HAP-1 (cell line): ENCODE measurements at regions of chr10 and their contacts with region 1.

Region 1: GRCh38 chr10:125982260-125982948 is 86.0 kb downstream of the FANK1 start:
- DNase-seq: peak; percentile 49 to 66
- H3K4me3 ChIP-seq: no peak overlapping the region
- H3K4me1 ChIP-seq: peaks cover 8% of the 10 kb centered on the region
- H3K27me3 ChIP-seq: no peaks in the 10 kb centered on the region

Region 2: GRCh38 chr10:126160971-126161659 is 178.7 kb after region 1 on chr10:
- in situ Hi-C with region 1: loop called (anchors 5 kb)
- DNase-seq: peak; percentile 36 to 50
- H3K4me3 ChIP-seq: no peak overlapping the region
- H3K4me1 ChIP-seq: no peaks in the 10 kb centered on the region; the same call in 1 of the 2 replicates
- H3K27me3 ChIP-seq: no peaks in the 10 kb centered on the region

Region 3: DNA sequence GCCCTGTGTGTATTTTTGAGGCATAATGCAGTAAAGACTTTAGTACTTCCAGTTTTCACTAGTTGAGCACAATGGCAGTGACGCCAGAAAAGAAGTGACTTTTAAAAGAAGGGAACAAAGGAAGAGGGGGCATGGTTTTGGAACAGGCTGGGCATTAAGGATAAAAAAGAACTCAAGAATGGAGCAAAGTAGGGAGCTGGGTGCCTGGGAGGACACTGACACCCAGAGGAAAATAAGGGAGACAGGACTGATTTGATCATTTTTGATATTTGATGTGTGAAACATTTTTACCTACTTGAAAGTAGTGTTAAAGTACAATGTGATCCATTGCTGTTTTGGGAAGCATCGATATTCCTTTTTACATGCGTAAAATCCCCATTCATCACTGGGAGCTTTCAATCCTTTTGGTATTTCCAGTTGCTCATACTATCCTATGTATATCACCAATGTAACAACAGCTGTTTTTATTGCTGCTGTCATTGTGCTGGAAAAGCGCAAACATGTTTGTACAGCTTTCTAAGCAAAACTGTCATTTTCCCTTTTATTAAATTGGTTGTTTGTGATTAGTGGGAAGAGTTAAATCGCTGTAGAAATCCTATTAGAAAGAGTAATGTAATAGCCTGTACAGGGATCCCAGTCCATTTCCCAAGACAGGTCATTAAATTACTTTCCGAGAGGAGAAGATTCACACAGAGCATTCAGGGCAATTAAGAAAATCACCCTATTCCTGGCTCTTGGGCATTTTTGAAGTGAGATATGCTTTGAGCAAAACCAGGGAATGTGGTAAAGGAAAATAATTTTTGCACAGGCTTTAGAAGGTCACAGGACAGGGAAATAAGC is 320.6 kb after region 1 on chr10:
- in situ Hi-C with region 1: loop called (anchors 5 kb)
- DNase-seq: peak; percentile 33 to 50
- H3K4me3 ChIP-seq: no peak overlapping the region
- H3K4me1 ChIP-seq: peaks cover 7% of the 10 kb centered on the region
- H3K27me3 ChIP-seq: no peaks in the 10 kb centered on the region; the same call in 1 of the 2 replicates

Region 4: GRCh38 chr10:126397640-126398382 is 415.4 kb after region 1 on chr10:
- in situ Hi-C with region 1: loop called (anchors 10 kb)
- DNase-seq: no peak
- H3K4me3 ChIP-seq: no peak overlapping the region
- H3K4me1 ChIP-seq: no peaks in the 10 kb centered on the region
- H3K27me3 ChIP-seq: peaks cover 3% of the 10 kb centered on the region; the same call in 1 of the 2 replicates

Region 5: GRCh38 chr10:126504063-126504739 is 521.8 kb after region 1 on chr10:
- in situ Hi-C with region 1: loop called (anchors 10 kb)
- DNase-seq: peak; percentile 51 to 56
- H3K4me3 ChIP-seq: no peak overlapping the region
- H3K4me1 ChIP-seq: no peaks in the 10 kb centered on the region
- H3K27me3 ChIP-seq: no peaks in the 10 kb centered on the region